Panc1 (cell line): ENCODE measurements at regions of chr1 and their contacts with region 1.

Region 1: GRCh38 chr1:932776-933602 is 9.3 kb downstream of the SAMD11 start:
- DNase-seq: no peak
- ATAC-seq: no peak
- H3K4me3 ChIP-seq: no peak overlapping the region
- H3K27ac ChIP-seq: peak overlapping the region; percentile 29; the same call in 1 of the 2 replicates
- H3K4me1 ChIP-seq: peaks cover 45% of the 10 kb centered on the region
- H3K27me3 ChIP-seq: no peaks in the 10 kb centered on the region
- CTCF ChIP-seq: no peak

Region 2: GRCh38 chr1:958823-959729 is 26.1 kb after region 1 on chr1 and contains the start of gene NOC2L:
- CTCF ChIA-PET with region 1: no interaction called
- POLR2A ChIA-PET with region 1: interaction called, 12 read pairs
- in situ Hi-C with region 1: no loop called
- intact Hi-C with region 1: no loop called
- DNase-seq: no peak
- ATAC-seq: peak; percentile 89
- H3K4me3 ChIP-seq: peak within 1 kb of the TSS; percentile 85 to 99
- H3K27ac ChIP-seq: peak within 1 kb of the TSS; percentile 95
- H3K4me1 ChIP-seq: peaks cover 7% of the 10 kb centered on the region
- H3K27me3 ChIP-seq: no peaks in the 10 kb centered on the region
- CTCF ChIP-seq: no peak
- total RNA-seq, gene NOC2L: 193 TPM

Region 3: GRCh38 chr1:1374929-1375662 is 442.1 kb after region 1 on chr1 and contains the start of gene AURKAIP1:
- CTCF ChIA-PET with region 1: no interaction called
- POLR2A ChIA-PET with region 1: no interaction called
- in situ Hi-C with region 1: no loop called
- intact Hi-C with region 1: no loop called
- DNase-seq: peak; percentile 98
- ATAC-seq: peak; percentile 91
- H3K4me3 ChIP-seq: peak within 1 kb of the TSS; percentile 72 to 97
- H3K27ac ChIP-seq: peak within 1 kb of the TSS; percentile 90
- H3K4me1 ChIP-seq: peaks cover 32% of the 10 kb centered on the region
- H3K27me3 ChIP-seq: no peaks in the 10 kb centered on the region
- CTCF ChIP-seq: peak; percentile 48; the same call in 1 of the 2 replicates
- total RNA-seq, gene AURKAIP1: 335 TPM